Activated CD8-positive, alpha-beta T cell treated with anti-CD3 and anti-CD28 coated beads, Interleukin-2, amount 10 ng/mL, durations not matched to agents 7 days and 5 days (primary cell): ENCODE measurements at regions of chr1 and their contacts with region 1.

Region 1: GRCh38 chr1:9145021-9145668 is 16.2 kb upstream of the GPR157 start:
- DNase-seq: no peak
- ATAC-seq: no peak
- H3K4me3 Mint-ChIP-seq: no peak overlapping the region
- H3K27ac Mint-ChIP-seq: no peak overlapping the region
- H3K4me1 Mint-ChIP-seq: peaks cover 10% of the 10 kb centered on the region
- H3K27me3 Mint-ChIP-seq: peaks cover 1% of the 10 kb centered on the region

Region 2: DNA sequence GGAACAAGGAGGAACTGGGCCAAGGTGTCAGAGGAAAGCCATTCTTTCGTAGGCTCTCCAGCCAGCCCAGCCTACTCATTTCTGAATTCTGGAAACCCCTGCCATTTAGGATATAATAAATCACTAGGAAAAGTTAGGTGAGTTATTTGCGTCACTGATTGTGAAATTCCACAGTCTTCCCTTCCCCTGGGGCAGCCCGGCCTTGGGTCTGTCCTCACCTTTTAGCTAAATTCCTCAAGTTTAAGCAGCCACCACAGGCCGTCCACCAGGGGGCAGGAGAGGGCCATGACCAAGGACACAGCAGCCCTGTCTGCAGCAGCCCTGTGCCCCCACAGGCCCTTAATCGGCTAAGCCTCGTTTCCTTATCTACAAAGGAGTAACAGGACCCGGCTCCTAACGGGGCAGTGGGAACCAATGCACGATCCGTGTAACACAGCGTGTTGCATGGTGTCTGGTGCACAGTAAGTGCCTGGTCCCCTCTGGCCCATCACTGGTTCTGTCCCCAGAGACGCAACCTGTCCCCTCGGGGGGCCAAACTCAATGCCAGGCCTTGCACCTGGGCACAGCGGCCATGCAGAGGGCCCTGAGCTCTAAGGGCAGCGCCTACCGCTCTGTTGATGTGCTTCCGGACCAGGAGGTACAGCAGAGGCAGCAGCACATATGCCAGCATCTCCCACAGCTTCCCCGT is 34.3 kb before region 1 on chr1:
- CTCF ChIA-PET with region 1: interaction called, 21 read pairs
- POLR2A ChIA-PET with region 1: no interaction called
- DNase-seq: peak; percentile 90
- ATAC-seq: peak; percentile 82
- H3K4me3 Mint-ChIP-seq: no peak overlapping the region
- H3K27ac Mint-ChIP-seq: no peak overlapping the region
- H3K4me1 Mint-ChIP-seq: peaks cover 16% of the 10 kb centered on the region
- H3K27me3 Mint-ChIP-seq: no peaks in the 10 kb centered on the region

Region 3: DNA sequence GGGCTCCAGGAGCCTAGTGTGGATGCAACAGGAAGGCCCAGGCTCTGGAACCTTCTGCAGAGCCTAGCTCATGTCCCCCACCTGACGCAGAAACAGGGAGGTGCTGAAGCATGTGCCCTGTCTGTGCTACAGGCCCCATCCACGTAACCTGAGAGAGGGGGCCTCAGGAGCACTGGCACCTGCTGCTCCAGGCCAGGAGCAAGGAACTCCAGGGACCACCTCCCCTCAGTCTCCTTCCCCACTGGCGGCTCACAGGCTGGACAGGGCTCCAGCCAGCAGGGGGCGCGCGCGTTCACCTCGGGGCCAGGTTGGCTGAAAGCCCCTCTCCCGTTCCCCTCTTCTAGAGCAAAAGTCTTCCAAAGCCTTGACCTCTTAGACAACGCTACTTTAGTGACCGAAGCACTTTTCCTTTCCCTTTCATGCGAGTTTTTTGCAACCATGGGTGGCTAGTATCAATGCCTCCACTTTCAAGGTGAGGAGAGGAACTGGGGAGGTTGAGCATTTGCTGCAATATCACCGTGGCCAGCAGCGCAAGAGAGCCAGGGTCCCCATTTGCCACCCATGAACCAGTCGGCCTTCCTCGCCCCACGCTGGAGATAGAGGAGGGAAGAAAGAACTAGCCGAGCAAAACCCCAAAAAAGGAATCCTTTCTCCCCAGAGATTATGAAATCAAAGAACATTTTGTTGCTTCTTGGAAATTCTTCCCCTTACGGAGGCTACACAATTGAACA is 36.2 kb after region 1 on chr1:
- CTCF ChIA-PET with region 1: interaction called, 10 read pairs
- POLR2A ChIA-PET with region 1: no interaction called
- DNase-seq: peak; percentile 76
- ATAC-seq: peak; percentile 77
- H3K4me3 Mint-ChIP-seq: peak overlapping the region; percentile 76
- H3K27ac Mint-ChIP-seq: peak overlapping the region; percentile 64
- H3K4me1 Mint-ChIP-seq: peaks cover 37% of the 10 kb centered on the region
- H3K27me3 Mint-ChIP-seq: peaks cover 14% of the 10 kb centered on the region

Region 4: GRCh38 chr1:9196129-9197040 is 51.2 kb after region 1 on chr1:
- CTCF ChIA-PET with region 1: interaction called, 13 read pairs
- POLR2A ChIA-PET with region 1: no interaction called
- DNase-seq: peak; percentile 69
- ATAC-seq: peak; percentile 45
- H3K4me3 Mint-ChIP-seq: no peak overlapping the region
- H3K27ac Mint-ChIP-seq: no peak overlapping the region
- H3K4me1 Mint-ChIP-seq: peaks cover 11% of the 10 kb centered on the region
- H3K27me3 Mint-ChIP-seq: peaks cover 52% of the 10 kb centered on the region

Region 5: GRCh38 chr1:9201401-9202239 is 56.5 kb after region 1 on chr1:
- CTCF ChIA-PET with region 1: interaction called, 13 read pairs
- POLR2A ChIA-PET with region 1: no interaction called
- DNase-seq: peak; percentile 42
- ATAC-seq: no peak
- H3K4me3 Mint-ChIP-seq: peak overlapping the region; percentile 25
- H3K27ac Mint-ChIP-seq: no peak overlapping the region
- H3K4me1 Mint-ChIP-seq: peaks cover 35% of the 10 kb centered on the region
- H3K27me3 Mint-ChIP-seq: peaks cover 82% of the 10 kb centered on the region